CD4-positive, alpha-beta memory T cell (primary cell): ENCODE measurements at regions of chr2 and their contacts with region 1.

Region 1: DNA sequence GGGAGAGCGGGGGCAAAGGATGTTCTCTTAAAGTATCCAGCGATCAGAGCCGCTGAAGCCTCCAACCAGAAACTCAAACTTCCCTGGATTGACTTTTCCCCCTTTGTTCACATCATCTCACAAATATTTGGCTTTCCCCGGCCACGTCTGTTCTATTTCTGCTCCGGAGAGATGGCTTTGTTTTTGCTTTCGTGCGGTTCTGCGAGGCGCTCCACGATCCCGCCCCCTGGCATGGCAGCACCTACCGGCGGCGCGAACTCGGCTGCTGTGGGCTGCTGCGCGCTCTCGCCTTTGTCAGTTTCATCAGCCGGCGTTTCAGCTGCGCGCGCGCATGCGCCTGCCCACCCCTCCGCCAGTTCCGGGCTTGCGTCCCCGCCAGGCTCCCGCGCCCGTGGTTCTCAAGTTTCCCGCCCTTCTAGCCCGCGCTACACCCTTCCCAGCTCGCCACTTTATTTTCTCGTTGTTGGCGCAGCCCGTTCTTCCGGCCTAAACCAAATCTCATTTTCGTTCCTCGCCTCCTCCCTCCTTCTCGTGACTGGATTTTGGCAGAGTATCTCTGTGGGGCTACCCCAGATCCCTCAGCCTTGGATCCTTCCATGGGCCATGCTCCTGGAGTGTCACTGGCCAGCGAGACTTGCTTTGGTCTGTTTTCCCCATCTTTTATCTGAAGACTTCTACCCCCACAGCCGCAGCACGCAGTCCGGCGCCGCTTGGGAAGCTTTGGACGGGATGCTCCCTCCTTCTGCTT is 98.0 kb downstream of the INSIG2 start:
- DNase-seq: peak; percentile 82 to 89 (median 88)
- H3K4me3 ChIP-seq: peak overlapping the region; percentile 73 to 80
- H3K4me3 Mint-ChIP-seq: peak overlapping the region; percentile 93 to 99 (median 96)
- H3K27ac ChIP-seq: peak overlapping the region; percentile 57
- H3K27ac Mint-ChIP-seq: peak overlapping the region; percentile 87 to 99 (median 95)
- H3K4me1 ChIP-seq: peaks cover 6% of the 10 kb centered on the region
- H3K4me1 Mint-ChIP-seq: peaks cover 15 to 25% (median 18%) of the 10 kb centered on the region in 4 donors
- H3K27me3 ChIP-seq: no peaks in the 10 kb centered on the region
- H3K27me3 Mint-ChIP-seq: no peaks in the 10 kb centered on the region

Region 2: DNA sequence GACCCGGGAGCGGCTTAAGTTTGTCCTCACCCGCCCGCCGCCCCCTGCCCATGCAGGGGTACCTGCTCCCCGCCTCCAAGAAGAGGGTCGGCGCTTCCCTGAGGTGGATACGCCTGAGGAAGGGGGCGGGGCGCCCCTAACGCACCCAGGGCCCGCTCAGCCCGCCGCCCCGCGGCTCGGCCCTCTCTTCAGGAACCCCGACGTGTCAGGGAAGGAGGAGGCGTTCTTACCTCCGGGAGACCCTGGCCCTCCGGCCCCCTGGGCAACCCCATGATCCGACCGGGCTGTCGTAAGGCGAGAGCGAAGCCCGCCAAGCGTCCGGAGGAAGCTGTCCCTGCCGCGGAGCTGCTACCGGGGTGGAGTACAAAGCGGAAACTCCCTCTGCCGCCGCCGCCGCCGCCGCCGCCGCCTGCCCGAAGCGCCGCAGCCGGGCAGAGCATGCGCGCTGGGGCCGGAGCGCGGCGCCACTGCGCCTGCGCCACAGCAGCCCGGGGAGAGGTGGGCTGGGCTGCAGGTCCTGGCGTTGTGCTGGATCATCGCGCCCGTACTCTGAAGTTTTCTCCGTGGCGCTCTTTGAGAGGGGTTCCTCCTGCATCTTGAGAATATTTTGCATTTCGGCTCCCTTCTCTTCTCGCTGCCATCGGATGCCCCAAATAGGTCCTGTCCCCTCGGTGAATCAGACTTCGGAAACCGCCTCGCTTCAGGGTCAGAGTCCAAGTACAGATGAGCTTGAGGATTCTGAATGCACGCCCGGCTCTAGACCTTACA is 172.4 kb before region 1 on chr2 and contains the start of gene CCDC93:
- CTCF ChIA-PET with region 1: no interaction called
- POLR2A ChIA-PET with region 1: interaction called, 6 read pairs
- intact Hi-C with region 1: loop called (anchors 2 kb)
- DNase-seq: peak; percentile 85 to 94 (median 91)
- H3K4me3 ChIP-seq: peak within 1 kb of the TSS; percentile 57 to 95
- H3K4me3 Mint-ChIP-seq: peak within 1 kb of the TSS; percentile 94 to 98 (median 96)
- H3K27ac ChIP-seq: peak within 1 kb of the TSS; percentile 98
- H3K27ac Mint-ChIP-seq: peak within 1 kb of the TSS; percentile 90 to 97 (median 95)
- H3K4me1 ChIP-seq: peaks cover 35% of the 10 kb centered on the region
- H3K4me1 Mint-ChIP-seq: peaks cover 26 to 47% (median 34%) of the 10 kb centered on the region in 4 donors
- H3K27me3 ChIP-seq: no peaks in the 10 kb centered on the region
- H3K27me3 Mint-ChIP-seq: no peaks in the 10 kb centered on the region
- total RNA-seq, gene CCDC93: 73.1 to 73.3 TPM

Region 3: DNA sequence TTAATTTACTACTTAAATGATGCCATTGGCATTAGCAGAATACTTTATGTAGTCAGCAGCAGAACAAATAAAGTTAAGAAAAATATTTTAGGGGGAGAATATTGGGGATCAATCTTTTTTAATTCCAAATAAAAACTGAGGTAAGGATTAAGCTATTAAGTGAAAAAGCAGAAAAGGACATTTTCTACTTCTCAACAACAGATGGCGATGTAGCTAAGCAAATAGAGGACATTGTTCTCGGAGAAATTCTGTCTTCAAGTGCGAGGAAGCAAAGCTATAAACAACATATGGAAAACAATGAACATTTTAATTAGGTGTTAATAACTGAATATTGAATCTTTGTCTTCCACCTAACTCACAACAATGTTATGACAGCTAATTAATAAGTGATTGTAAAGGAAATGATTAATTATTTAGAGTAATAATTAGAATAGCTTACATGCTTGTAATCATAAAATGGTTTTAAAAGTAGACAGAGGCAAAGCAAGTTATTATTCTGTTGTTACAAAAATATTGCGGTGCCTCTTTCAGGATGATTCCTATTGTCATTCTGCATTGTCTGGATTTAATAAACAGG is 139.6 kb before region 1 on chr2:
- CTCF ChIA-PET with region 1: interaction called, 13 read pairs
- POLR2A ChIA-PET with region 1: no interaction called
- intact Hi-C with region 1: no loop called
- DNase-seq: peak in 4 of 5 donors; percentile 24 to 34 (median 26)
- H3K4me3 ChIP-seq: no peak overlapping the region
- H3K4me3 Mint-ChIP-seq: no peak overlapping the region
- H3K27ac ChIP-seq: no peak overlapping the region
- H3K27ac Mint-ChIP-seq: no peak overlapping the region
- H3K4me1 ChIP-seq: no peaks in the 10 kb centered on the region
- H3K4me1 Mint-ChIP-seq: no peaks in the 10 kb centered on the region
- H3K27me3 ChIP-seq: no peaks in the 10 kb centered on the region
- H3K27me3 Mint-ChIP-seq: peaks cover 24 to 45% of the 10 kb centered on the region in 2 donors

Region 4: GRCh38 chr2:118088051-118089024 is 97.9 kb before region 1 on chr2 and contains the start of gene INSIG2:
- CTCF ChIA-PET with region 1: interaction called, 3 read pairs
- POLR2A ChIA-PET with region 1: interaction called, 11 read pairs
- intact Hi-C with region 1: loop called (anchors 1 kb)
- DNase-seq: peak; percentile 82 to 88 (median 83)
- H3K4me3 ChIP-seq: peak within 1 kb of the TSS; percentile 87 to 94
- H3K4me3 Mint-ChIP-seq: peak within 1 kb of the TSS; percentile 90 to 96 (median 93)
- H3K27ac ChIP-seq: peak within 1 kb of the TSS; percentile 66
- H3K27ac Mint-ChIP-seq: peak within 1 kb of the TSS; percentile 70 to 94 (median 94)
- H3K4me1 ChIP-seq: peaks cover 38% of the 10 kb centered on the region
- H3K4me1 Mint-ChIP-seq: peaks cover 14 to 23% (median 18%) of the 10 kb centered on the region in 4 donors
- H3K27me3 ChIP-seq: no peaks in the 10 kb centered on the region
- H3K27me3 Mint-ChIP-seq: peaks cover 0 to 3% of the 10 kb centered on the region in 2 donors
- total RNA-seq, gene INSIG2: 18.0 to 19.7 TPM

Region 5: DNA sequence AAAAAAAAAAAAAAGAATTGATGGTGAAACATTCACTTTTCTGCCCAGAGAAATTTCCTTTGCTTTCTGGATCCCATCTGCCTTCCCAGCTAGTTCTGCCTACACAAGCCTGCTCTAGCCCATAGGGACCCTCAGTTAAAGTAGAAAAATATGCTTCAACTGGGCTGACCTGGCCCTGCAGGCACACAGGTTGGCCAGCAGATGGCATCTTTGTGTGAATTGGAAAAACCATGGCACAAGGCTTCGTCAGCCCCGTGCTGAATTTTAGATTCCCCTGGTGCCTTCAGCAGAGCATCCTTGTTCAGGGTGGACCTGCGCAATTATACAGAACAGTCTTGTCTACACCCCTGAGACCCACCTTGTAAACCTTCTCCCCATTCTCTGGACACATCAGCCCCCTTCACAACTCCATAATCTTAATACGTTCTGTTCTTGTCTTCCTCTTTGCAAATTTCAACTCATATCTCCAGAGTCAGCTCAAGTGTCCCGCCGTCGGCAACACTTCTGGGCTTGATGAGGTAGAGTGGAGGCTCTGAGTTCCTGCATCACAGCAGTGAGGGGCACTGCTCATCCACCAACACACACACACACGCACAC is 16.5 kb after region 1 on chr2:
- CTCF ChIA-PET with region 1: interaction called, 18 read pairs
- POLR2A ChIA-PET with region 1: interaction called, 3 read pairs
- intact Hi-C with region 1: loop called (anchors 2 kb)
- DNase-seq: peak in 4 of 5 donors; percentile 40 to 49 (median 42)
- H3K4me3 ChIP-seq: no peak overlapping the region
- H3K4me3 Mint-ChIP-seq: peak overlapping the region in 6 of 8 donors; percentile 11 to 75 (median 56)
- H3K27ac ChIP-seq: no peak overlapping the region
- H3K27ac Mint-ChIP-seq: no peak overlapping the region
- H3K4me1 ChIP-seq: no peaks in the 10 kb centered on the region
- H3K4me1 Mint-ChIP-seq: peaks cover 0 to 6% (median 5%) of the 10 kb centered on the region in 4 donors
- H3K27me3 ChIP-seq: no peaks in the 10 kb centered on the region
- H3K27me3 Mint-ChIP-seq: peaks cover 13 to 16% of the 10 kb centered on the region in 2 donors

Region 6: GRCh38 chr2:118309946-118310680 is 123.8 kb after region 1 on chr2:
- CTCF ChIA-PET with region 1: no interaction called
- POLR2A ChIA-PET with region 1: interaction called, 6 read pairs
- intact Hi-C with region 1: loop called (anchors 2 kb)
- DNase-seq: peak; percentile 74 to 80 (median 77)
- H3K4me3 ChIP-seq: peak overlapping the region; percentile 63 to 81
- H3K4me3 Mint-ChIP-seq: peak overlapping the region; percentile 86 to 95 (median 92)
- H3K27ac ChIP-seq: peak overlapping the region; percentile 66
- H3K27ac Mint-ChIP-seq: peak overlapping the region; percentile 90 to 99 (median 97)
- H3K4me1 ChIP-seq: peaks cover 10% of the 10 kb centered on the region
- H3K4me1 Mint-ChIP-seq: peaks cover 1 to 13% (median 7%) of the 10 kb centered on the region in 4 donors
- H3K27me3 ChIP-seq: no peaks in the 10 kb centered on the region
- H3K27me3 Mint-ChIP-seq: peaks cover 0 to 2% of the 10 kb centered on the region in 2 donors

Region 7: GRCh38 chr2:119366649-119367471 is 1180.6 kb after region 1 on chr2 and contains the starts of genes C2orf76 and DBI:
- CTCF ChIA-PET with region 1: no interaction called
- POLR2A ChIA-PET with region 1: interaction called, 5 read pairs
- intact Hi-C with region 1: loop called (anchors 5 kb)
- DNase-seq: peak; percentile 89 to 90 (median 89)
- H3K4me3 ChIP-seq: peak within 1 kb of the TSS; percentile 95 to 97
- H3K4me3 Mint-ChIP-seq: peak within 1 kb of the TSS; percentile 94 to 99 (median 96)
- H3K27ac ChIP-seq: peak within 1 kb of the TSS; percentile 92
- H3K27ac Mint-ChIP-seq: peak within 1 kb of the TSS; percentile 89 to 98 (median 94)
- H3K4me1 ChIP-seq: peaks cover 31% of the 10 kb centered on the region
- H3K4me1 Mint-ChIP-seq: peaks cover 32 to 52% (median 40%) of the 10 kb centered on the region in 4 donors
- H3K27me3 ChIP-seq: no peaks in the 10 kb centered on the region
- H3K27me3 Mint-ChIP-seq: no peaks in the 10 kb centered on the region
- total RNA-seq, gene C2orf76: 8.8 to 9.6 TPM
- total RNA-seq, gene DBI: 44.7 to 51.5 TPM